CD4-positive, alpha-beta memory T cell (primary cell): ENCODE measurements at regions of chr19 and their contacts with region 1.

Region 1: DNA sequence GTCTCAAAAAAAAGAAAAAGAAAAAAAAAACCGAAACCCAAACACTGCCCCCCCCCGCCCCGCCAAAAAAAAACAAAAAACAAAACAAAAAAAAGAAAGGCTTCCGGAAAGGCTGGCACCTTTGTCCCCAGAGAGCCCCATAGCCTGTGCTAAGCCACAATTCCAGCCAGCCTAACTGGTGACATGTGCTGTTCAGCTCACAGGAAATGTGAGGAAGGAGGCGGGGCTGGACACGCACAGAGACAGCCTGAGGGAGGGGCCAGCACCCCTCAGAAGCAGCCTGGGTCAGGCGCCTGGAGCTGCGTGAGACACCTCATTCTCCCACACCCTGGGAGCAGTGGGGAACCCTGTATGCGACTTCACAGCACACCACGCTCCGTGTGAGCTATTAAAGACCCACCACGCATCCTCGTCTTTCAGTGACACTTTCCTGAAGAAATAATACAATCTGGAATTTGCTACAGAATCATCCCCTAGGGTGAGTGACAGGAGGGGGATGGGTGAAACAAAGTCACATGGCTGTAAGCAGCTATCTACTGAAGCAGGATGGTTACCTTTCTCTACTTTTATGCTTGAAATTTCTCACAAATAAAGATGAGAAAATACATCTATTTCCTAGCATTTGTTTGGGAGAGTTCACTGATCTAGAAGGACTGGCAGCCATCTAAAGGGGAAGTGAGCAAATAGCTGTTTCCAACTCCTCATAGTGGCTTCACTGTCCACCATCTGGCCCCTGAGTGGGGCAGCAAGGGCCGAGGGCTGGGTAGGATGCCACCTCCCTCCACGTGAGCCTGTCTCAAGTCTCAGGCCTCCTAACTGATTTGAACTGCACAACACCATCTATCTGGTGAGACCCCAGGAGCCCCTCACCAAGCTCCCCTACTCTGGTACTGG is 12.3 kb upstream of the SLC35E1 start:
- DNase-seq: peak; percentile 89 to 99 (median 91)
- H3K4me3 ChIP-seq: peak overlapping the region; percentile 45 to 52
- H3K4me3 Mint-ChIP-seq: peak overlapping the region; percentile 70 to 90 (median 80)
- H3K27ac ChIP-seq: peak overlapping the region; percentile 58
- H3K27ac Mint-ChIP-seq: peak overlapping the region; percentile 96 to 99 (median 97)
- H3K4me1 ChIP-seq: peaks cover 86% of the 10 kb centered on the region
- H3K4me1 Mint-ChIP-seq: peaks cover 53 to 93% (median 74%) of the 10 kb centered on the region in 4 donors
- H3K27me3 ChIP-seq: no peaks in the 10 kb centered on the region
- H3K27me3 Mint-ChIP-seq: no peaks in the 10 kb centered on the region

Region 2: GRCh38 chr19:16566161-16566560 is 18.3 kb before region 1 on chr19:
- CTCF ChIA-PET with region 1: interaction called, 9 read pairs
- POLR2A ChIA-PET with region 1: interaction called, 109 read pairs
- intact Hi-C with region 1: loop called (anchors 1 kb)
- DNase-seq: peak; percentile 89 to 96 (median 93)
- H3K4me3 ChIP-seq: peak overlapping the region; percentile 22 to 31
- H3K4me3 Mint-ChIP-seq: peak overlapping the region; percentile 83 to 98 (median 86)
- H3K27ac ChIP-seq: peak overlapping the region; percentile 71
- H3K27ac Mint-ChIP-seq: peak overlapping the region; percentile 87 to 100 (median 100)
- H3K4me1 ChIP-seq: peaks cover 47% of the 10 kb centered on the region
- H3K4me1 Mint-ChIP-seq: peaks cover 23 to 61% (median 44%) of the 10 kb centered on the region in 4 donors
- H3K27me3 ChIP-seq: no peaks in the 10 kb centered on the region
- H3K27me3 Mint-ChIP-seq: no peaks in the 10 kb centered on the region

Region 3: DNA sequence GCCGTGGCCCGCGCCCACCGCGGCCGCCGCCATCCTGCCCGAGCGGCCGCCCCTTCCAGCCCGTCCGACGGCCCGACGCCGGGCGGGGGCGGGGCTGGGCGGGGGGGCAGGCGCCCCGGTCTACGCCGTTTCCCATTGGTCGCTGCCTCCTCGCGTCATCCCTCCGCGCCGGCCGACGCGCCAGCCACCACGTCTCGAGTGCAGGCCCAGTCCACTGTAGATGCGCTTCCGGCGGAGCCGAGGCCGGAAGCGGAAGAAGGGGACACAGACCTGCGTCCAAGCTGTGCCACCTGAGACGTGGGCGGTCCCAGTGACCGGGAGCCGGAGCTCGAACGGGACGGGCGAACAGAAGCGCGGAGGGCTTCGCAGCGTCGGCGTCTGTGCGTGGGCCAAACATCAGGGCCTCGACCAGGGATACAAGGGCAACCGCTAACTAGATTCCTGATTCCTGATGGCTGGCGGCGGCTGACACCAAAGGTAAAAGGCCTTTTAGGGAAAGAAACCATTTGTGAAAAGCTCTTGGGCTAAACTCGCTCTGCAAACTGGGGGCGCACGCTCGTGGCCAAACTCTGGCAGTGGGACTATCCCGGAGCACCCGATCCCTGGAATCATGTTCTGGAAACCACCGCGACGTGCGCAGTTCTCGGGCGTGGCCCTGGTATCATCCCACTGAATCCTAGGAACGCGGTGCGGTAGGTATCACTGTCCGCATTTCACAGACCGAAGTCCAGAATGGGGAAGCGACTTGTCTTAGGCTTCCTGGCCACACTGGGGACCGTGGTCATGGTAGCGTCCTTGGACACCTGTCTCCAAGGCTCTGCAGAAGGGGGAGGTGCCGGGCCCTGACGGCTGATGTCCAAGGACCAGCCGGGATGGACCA is 11.9 kb before region 1 on chr19 and contains the start of gene SLC35E1:
- CTCF ChIA-PET with region 1: interaction called, 9 read pairs
- POLR2A ChIA-PET with region 1: interaction called, 109 read pairs
- intact Hi-C with region 1: loop called (anchors 1 kb)
- DNase-seq: peak; percentile 89 to 91 (median 91)
- H3K4me3 ChIP-seq: peak within 1 kb of the TSS; percentile 95 to 98
- H3K4me3 Mint-ChIP-seq: peak within 1 kb of the TSS; percentile 96 to 100 (median 99)
- H3K27ac ChIP-seq: peak within 1 kb of the TSS; percentile 91
- H3K27ac Mint-ChIP-seq: peak within 1 kb of the TSS; percentile 98 to 100 (median 99)
- H3K4me1 ChIP-seq: peaks cover 54% of the 10 kb centered on the region
- H3K4me1 Mint-ChIP-seq: peaks cover 33 to 76% (median 57%) of the 10 kb centered on the region in 4 donors
- H3K27me3 ChIP-seq: no peaks in the 10 kb centered on the region
- H3K27me3 Mint-ChIP-seq: no peaks in the 10 kb centered on the region
- total RNA-seq, gene SLC35E1: 38.8 TPM